A673 (cell line): ENCODE measurements at regions of chr4 and their contacts with region 1.

Region 1: GRCh38 chr4:139301113-139301820 is at the start of gene NAA15:
- DNase-seq: peak; percentile 100
- H3K4me3 ChIP-seq: peak within 1 kb of the TSS; percentile 93
- H3K27ac ChIP-seq: peak within 1 kb of the TSS; percentile 95
- H3K4me1 ChIP-seq: peaks cover 15% of the 10 kb centered on the region
- H3K27me3 ChIP-seq: no peaks in the 10 kb centered on the region
- CTCF ChIP-seq: no peak
- total RNA-seq, gene NAA15: 105 and 123 TPM in 2 replicates

Region 2: DNA sequence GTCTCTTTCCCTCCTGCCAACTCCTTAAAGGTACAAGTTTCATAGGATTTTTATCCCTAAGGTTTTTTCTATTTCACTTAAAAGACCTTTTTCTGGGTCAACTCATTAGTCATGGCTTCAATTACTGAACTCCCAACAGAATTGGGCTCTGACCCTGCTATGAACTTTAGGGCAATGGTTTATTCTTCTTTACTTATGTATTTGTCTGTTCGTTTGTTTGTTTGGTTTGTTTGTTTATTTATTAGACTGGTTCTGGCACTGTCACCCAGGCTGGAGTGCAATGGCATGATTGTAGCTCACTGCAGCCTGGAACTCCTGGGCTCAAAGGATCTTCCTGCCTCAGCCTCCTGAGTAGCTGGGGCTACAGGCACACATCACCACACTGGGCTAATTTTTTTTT is 291.6 kb before region 1 on chr4:
- CTCF ChIA-PET with region 1: no interaction called
- POLR2A ChIA-PET with region 1: no interaction called
- intact Hi-C with region 1: no loop called
- DNase-seq: no peak
- H3K4me3 ChIP-seq: no peak overlapping the region
- H3K27ac ChIP-seq: no peak overlapping the region
- H3K4me1 ChIP-seq: peaks cover 9% of the 10 kb centered on the region
- H3K27me3 ChIP-seq: no peaks in the 10 kb centered on the region
- CTCF ChIP-seq: no peak

Region 3: DNA sequence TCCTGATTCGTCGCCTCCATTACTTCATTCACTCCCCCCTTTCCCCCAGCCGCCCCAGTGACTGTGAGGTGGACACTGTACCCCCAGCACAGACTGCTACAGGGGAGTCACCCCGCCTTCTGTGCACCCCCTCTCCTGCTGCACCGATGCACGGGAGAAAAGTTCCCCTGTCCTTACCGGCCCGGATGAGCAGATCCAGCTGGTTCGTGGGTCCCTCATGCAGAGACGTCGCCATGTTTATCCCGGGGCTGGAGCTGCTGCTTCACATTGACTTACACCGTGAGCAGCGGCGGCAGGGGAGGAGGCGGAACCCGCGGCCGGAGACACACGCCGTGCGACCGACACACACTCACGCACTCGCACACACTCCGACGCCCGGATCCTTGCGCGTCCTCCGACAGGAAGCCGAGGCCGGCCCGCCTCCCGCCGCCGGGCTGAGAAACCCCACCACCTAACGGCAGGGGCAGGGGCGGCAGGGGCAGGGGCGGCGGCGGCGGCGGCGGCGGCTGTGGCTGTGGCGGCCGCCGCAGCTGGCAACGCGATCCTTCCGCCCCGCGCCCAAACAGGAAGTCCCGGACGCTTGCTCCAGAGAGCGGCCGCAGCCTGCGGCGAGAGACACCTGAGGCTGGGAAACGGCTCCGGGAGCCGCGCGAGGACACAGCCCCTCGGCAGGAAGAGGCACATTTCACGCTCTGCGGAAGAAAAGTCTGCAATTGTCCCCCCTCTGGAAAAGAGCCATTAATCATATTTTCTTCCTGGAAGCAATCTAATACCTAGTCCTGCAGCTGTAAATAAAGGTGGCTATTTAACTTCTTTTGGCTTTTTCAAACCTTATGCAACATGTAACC is 217.1 kb before region 1 on chr4:
- CTCF ChIA-PET with region 1: no interaction called
- POLR2A ChIA-PET with region 1: no interaction called
- intact Hi-C with region 1: loop called (anchors 5 kb)
- DNase-seq: peak; percentile 97
- H3K4me3 ChIP-seq: peak overlapping the region; percentile 88
- H3K27ac ChIP-seq: peak overlapping the region; percentile 89
- H3K4me1 ChIP-seq: peaks cover 18% of the 10 kb centered on the region
- H3K27me3 ChIP-seq: no peaks in the 10 kb centered on the region
- CTCF ChIP-seq: peak; percentile 33; the same call in 1 of the 2 replicates

Region 4: GRCh38 chr4:139493176-139493575 is 191.9 kb after region 1 on chr4:
- CTCF ChIA-PET with region 1: no interaction called
- POLR2A ChIA-PET with region 1: no interaction called
- intact Hi-C with region 1: no loop called
- DNase-seq: no peak
- H3K4me3 ChIP-seq: no peak overlapping the region
- H3K27ac ChIP-seq: no peak overlapping the region
- H3K4me1 ChIP-seq: no peaks in the 10 kb centered on the region
- H3K27me3 ChIP-seq: no peaks in the 10 kb centered on the region
- CTCF ChIP-seq: no peak